AG04449 (cell line): ENCODE measurements at regions of chr2 and their contacts with region 1.

Region 1: DNA sequence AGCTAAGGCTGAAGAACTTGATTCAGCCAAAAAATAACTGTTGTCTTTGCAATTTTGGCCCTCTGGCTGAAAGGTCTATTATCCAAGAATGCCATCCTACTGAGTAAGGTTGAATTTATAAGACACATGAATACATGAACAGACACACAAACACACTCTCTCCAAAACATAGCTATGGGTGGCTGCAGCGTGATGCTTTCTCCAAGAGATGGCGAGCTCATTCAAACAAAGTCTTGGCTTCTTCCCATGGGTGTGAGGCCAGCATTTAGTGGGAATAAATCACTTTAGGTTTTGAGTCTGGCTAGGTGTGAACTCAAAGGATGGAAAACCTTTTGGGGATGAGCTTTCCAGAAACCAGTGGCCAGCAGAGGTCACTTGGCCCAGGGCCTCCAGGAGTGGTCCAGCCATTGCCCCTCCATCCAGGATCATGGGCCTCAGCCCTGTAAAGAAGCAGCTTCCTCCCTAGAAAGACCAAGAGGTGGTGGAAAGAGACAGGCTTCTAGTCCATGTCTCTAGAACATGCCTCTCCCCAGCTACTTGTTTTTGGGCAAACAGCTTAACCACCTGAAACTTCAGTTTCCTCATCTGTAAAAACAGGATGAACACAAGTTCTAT is 11.0 kb upstream of the OSR1 start:
- DNase-seq: no peak
- H3K4me3 ChIP-seq: no peak overlapping the region
- CTCF ChIP-seq: peak; percentile 68

Region 2: GRCh38 chr2:19496646-19497045 is 127.2 kb after region 1 on chr2:
- CTCF ChIA-PET with region 1: no interaction called
- POLR2A ChIA-PET with region 1: no interaction called
- DNase-seq: no peak
- H3K4me3 ChIP-seq: no peak overlapping the region
- CTCF ChIP-seq: no peak

Region 3: GRCh38 chr2:19667085-19667484 is 297.6 kb after region 1 on chr2:
- CTCF ChIA-PET with region 1: interaction called, 104 read pairs
- POLR2A ChIA-PET with region 1: no interaction called
- DNase-seq: no peak
- H3K4me3 ChIP-seq: no peak overlapping the region
- CTCF ChIP-seq: peak; percentile 38

Region 4: GRCh38 chr2:19673213-19673791 is 303.9 kb after region 1 on chr2:
- CTCF ChIA-PET with region 1: interaction called, 104 read pairs
- POLR2A ChIA-PET with region 1: no interaction called
- DNase-seq: no peak
- H3K4me3 ChIP-seq: no peak overlapping the region
- CTCF ChIP-seq: no peak

Region 5: GRCh38 chr2:19746611-19747309 is 377.3 kb after region 1 on chr2:
- CTCF ChIA-PET with region 1: interaction called, 12 read pairs
- POLR2A ChIA-PET with region 1: no interaction called
- DNase-seq: no peak
- H3K4me3 ChIP-seq: no peak overlapping the region
- CTCF ChIP-seq: peak; percentile 50

Region 6: GRCh38 chr2:19855542-19856431 is 486.3 kb after region 1 on chr2:
- CTCF ChIA-PET with region 1: interaction called, 82 read pairs
- POLR2A ChIA-PET with region 1: no interaction called
- DNase-seq: no peak
- H3K4me3 ChIP-seq: no peak overlapping the region
- CTCF ChIP-seq: no peak